SK-N-SH (cell line): ENCODE measurements at regions of chr11 and their contacts with region 1.

Region 1: GRCh38 chr11:114262681-114263512 is 33.3 kb upstream of the NNMT start:
- DNase-seq: peak; percentile 75
- H3K4me3 ChIP-seq: peak overlapping the region in 1 of 2 experiments; percentile 27; a peak in 1 of 4 replicates
- H3K27ac ChIP-seq: no peak overlapping the region
- H3K4me1 ChIP-seq: no peaks in the 10 kb centered on the region; a peak in 1 of 4 replicates
- H3K27me3 ChIP-seq: peaks cover 14% of the 10 kb centered on the region; the same call in 1 of the 2 replicates
- CTCF ChIP-seq: peak; percentile 73
- EP300 ChIP-seq: no peak
- RAD21 ChIP-seq: peak; percentile 95

Region 2: DNA sequence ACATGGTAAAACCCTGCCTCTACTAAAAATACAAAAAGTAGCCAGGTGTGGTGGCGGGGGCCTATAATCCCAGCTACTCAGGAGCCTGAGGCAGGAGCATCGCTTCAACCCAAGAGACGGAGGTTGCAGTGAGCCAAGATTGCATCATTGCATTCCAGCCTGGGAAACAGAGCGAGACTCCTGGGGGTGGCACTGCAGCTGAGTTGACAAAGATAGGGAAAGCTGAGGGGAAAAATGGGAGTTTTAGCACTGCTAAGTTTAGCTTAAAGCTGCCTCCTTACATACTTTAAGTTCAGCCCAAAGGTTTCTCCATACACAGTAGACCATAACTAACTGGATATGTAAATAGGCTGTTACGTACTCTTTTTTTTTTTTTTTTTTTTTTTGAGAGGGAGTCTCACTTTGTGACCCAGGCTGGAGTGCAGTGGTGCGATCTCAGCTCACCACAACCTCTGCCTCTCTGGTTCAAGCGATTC is 378.5 kb before region 1 on chr11:
- CTCF ChIA-PET with region 1: interaction called, 17 read pairs
- POLR2A ChIA-PET with region 1: no interaction called
- DNase-seq: no peak
- H3K4me3 ChIP-seq: no peak overlapping the region
- H3K27ac ChIP-seq: no peak overlapping the region
- H3K4me1 ChIP-seq: no peaks in the 10 kb centered on the region
- H3K27me3 ChIP-seq: no peaks in the 10 kb centered on the region
- CTCF ChIP-seq: no peak
- EP300 ChIP-seq: no peak
- RAD21 ChIP-seq: no peak

Region 3: DNA sequence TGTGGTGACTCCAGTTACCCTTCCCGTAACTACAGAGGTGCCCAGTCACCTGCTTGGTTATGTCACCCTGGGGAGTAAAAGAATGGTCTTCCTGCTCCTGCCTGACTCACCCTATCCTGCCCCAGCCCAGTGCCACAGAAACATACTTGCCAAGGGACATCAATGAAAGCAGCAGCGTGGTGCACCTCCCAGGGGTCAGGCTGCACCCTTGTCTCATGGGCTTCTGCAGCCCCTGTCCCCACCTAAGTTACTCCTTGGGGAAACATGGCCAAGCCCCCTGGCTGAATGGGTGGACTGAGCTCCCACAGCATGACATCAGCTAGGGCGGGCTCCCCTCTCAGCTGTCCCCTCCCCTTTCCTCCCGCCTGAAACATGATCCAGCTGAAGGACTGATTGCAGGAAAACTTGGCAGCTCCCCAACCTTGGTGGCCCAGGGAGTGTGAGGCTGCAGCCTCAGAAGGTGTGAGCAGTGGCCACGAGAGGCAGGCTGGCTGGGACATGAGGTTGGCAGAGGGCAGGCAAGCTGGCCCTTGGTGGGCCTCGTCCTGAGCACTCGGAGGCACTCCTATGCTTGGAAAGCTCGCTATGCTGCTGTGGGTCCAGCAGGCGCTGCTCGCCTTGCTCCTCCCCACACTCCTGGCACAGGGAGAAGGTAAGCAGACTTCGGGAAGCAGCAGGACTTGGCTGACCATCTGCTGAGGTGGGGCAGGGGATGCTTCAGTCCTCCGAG is 288.0 kb before region 1 on chr11 and contains the start of gene HTR3A:
- CTCF ChIA-PET with region 1: interaction called, 24 read pairs
- POLR2A ChIA-PET with region 1: no interaction called
- DNase-seq: peak; percentile 43
- H3K4me3 ChIP-seq: no peak within 1 kb of the TSS
- H3K27ac ChIP-seq: no peak within 1 kb of the TSS
- H3K4me1 ChIP-seq: peaks cover 0 to 16% of the 10 kb centered on the region in 2 experiments; a peak in 1 of 4 replicates
- H3K27me3 ChIP-seq: no peaks in the 10 kb centered on the region; the same call in 1 of the 2 replicates
- CTCF ChIP-seq: no peak
- EP300 ChIP-seq: no peak
- RAD21 ChIP-seq: no peak
- polyA plus RNA-seq, gene HTR3A: not detected in 2 replicates

Region 4: GRCh38 chr11:114036156-114036811 is 226.6 kb before region 1 on chr11:
- CTCF ChIA-PET with region 1: interaction called, 445 read pairs
- POLR2A ChIA-PET with region 1: no interaction called
- DNase-seq: peak; percentile 90
- H3K4me3 ChIP-seq: peak overlapping the region; percentile 19 to 66; a peak in 3 of 4 replicates
- H3K27ac ChIP-seq: no peak overlapping the region
- H3K4me1 ChIP-seq: peaks cover 3% of the 10 kb centered on the region in 2 experiments; a peak in 2 of 4 replicates
- H3K27me3 ChIP-seq: peaks cover 25% of the 10 kb centered on the region; the same call in 1 of the 2 replicates
- CTCF ChIP-seq: peak; percentile 82
- EP300 ChIP-seq: no peak
- RAD21 ChIP-seq: peak; percentile 85

Region 5: DNA sequence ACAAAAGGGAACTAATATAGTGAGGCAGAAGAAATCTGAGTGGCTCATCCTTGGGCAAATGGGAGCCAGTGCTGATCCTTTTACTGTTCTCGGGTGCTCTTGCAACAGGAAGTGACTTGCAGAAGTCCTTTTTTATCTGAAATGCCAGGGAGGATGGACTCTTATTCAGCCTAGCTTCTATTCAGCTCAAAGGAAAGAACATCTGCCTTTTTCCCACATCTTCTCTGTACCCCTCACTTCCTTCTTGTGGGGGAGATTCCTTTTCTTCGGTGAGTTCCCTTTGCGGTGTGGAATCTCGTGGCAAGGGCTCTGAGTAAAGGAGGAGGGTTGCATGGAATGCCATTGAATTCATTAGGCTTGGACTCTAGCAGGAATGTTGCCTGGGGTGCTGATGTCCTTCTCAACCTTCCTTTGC is 127.2 kb before region 1 on chr11:
- CTCF ChIA-PET with region 1: interaction called, 12 read pairs
- POLR2A ChIA-PET with region 1: no interaction called
- DNase-seq: no peak
- H3K4me3 ChIP-seq: no peak overlapping the region
- H3K27ac ChIP-seq: no peak overlapping the region
- H3K4me1 ChIP-seq: peaks cover 5 to 14% of the 10 kb centered on the region in 2 experiments; a peak in 2 of 4 replicates
- H3K27me3 ChIP-seq: peaks cover 21% of the 10 kb centered on the region; the same call in 1 of the 2 replicates
- CTCF ChIP-seq: no peak
- EP300 ChIP-seq: no peak
- RAD21 ChIP-seq: no peak

Region 6: GRCh38 chr11:114219559-114220349 is 43.1 kb before region 1 on chr11:
- CTCF ChIA-PET with region 1: interaction called, 12 read pairs
- POLR2A ChIA-PET with region 1: no interaction called
- DNase-seq: no peak
- H3K4me3 ChIP-seq: no peak overlapping the region
- H3K27ac ChIP-seq: no peak overlapping the region
- H3K4me1 ChIP-seq: no peaks in the 10 kb centered on the region; a peak in 1 of 4 replicates
- H3K27me3 ChIP-seq: peaks cover 5% of the 10 kb centered on the region; the same call in 1 of the 2 replicates
- CTCF ChIP-seq: no peak
- EP300 ChIP-seq: no peak
- RAD21 ChIP-seq: no peak

Region 7: GRCh38 chr11:114280696-114281095 is 17.8 kb after region 1 on chr11:
- CTCF ChIA-PET with region 1: interaction called, 143 read pairs
- POLR2A ChIA-PET with region 1: no interaction called
- DNase-seq: peak; percentile 76
- H3K4me3 ChIP-seq: no peak overlapping the region
- H3K27ac ChIP-seq: no peak overlapping the region
- H3K4me1 ChIP-seq: peaks cover 0 to 7% of the 10 kb centered on the region in 2 experiments; a peak in 2 of 4 replicates
- H3K27me3 ChIP-seq: peaks cover 8% of the 10 kb centered on the region; the same call in 1 of the 2 replicates
- CTCF ChIP-seq: peak; percentile 77
- EP300 ChIP-seq: no peak
- RAD21 ChIP-seq: peak; percentile 92